Vagina (tissue), 2 donors: ENCODE measurements at regions of chr13 and their contacts with region 1.

Region 1: DNA sequence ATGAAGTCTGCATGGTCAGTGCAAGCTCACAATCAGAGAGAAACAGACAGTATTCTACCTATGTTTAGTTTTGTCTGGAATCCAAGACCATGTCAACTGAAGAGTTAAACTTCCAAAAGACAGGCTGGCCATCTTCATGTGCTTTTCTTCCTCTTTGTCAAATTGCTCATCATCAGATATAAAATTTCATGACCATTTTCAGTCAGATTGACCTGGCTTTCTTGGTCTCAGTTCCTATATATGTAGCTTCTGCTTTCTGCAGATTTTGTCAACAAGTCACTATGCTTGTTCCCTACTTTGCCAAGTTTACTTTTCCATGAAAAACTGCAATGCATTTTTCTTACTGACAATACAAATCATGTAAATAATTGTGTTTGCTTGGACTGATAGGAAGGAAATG is 13.9 kb downstream of the SLC46A3 start:
- DNase-seq: no peak
- H3K4me3 ChIP-seq: no peak overlapping the region
- H3K27ac ChIP-seq: no peak overlapping the region
- H3K4me1 ChIP-seq: no peaks in the 10 kb centered on the region
- H3K27me3 ChIP-seq: no peaks in the 10 kb centered on the region
- CTCF ChIP-seq: no peak
- POLR2A ChIP-seq: no peak

Region 2: DNA sequence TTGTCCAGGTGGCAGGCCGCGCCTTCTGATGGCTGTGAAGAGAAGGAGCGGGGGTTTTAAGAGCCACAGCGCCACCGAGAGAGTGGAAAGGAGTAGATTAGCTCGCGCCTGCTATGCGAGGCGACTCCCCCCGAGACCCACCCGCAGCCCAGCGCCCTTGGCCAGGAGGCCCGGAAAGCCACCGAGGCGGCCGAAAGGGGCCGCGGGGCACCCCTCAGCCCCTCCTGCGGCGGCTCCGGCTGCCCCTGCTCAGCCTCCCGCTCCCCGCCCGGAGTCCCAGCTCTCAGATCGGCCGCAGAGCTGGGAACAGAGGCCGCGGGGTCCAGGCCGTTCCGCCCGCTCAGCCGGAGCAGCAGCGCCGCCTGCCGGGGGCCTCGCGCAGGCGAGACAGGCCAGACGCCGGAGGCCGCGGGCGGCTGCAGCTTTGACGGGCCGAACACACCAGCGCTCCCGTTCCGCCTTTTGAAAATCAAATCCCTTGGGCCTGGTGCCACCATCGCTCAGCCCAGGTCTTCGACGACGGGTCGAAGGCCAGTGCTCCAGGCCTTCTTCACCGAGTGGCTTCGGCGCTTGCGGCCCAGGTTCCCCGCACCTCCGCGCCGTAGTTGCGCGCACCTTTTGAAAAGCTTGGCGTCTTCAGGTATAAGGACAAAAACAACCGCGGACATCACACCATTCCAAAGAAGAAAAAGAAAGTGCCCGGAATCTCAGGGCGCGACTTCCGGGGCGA is 751.1 kb before region 1 on chr13:
- intact Hi-C with region 1: loop called (anchors 5 kb)
- DNase-seq: no peak
- H3K4me3 ChIP-seq: peak overlapping the region; percentile 47 to 48
- H3K27ac ChIP-seq: no peak overlapping the region
- H3K4me1 ChIP-seq: peaks cover 19% of the 10 kb centered on the region
- H3K27me3 ChIP-seq: peaks cover 3% of the 10 kb centered on the region
- CTCF ChIP-seq: peak; percentile 32 to 77 (median 70)
- POLR2A ChIP-seq: no peak

Region 3: DNA sequence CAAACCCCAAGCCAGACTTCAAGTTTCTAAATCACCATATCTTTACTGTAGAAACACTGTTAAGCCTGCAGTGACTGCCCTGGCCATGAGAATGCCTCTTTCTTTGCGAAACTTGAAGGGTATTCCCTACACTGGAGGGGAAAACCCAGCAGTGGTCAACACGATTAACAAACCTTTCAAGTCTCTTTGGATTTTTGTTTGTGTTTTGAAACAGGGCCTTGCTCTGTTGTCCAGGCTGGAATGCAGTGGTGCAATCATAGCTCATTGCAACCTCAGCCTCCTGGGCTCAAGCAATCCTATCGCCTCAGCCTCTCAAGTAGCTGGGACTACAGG is 63.3 kb before region 1 on chr13:
- intact Hi-C with region 1: no loop called
- DNase-seq: no peak
- H3K4me3 ChIP-seq: no peak overlapping the region
- H3K27ac ChIP-seq: peak overlapping the region; percentile 45
- H3K4me1 ChIP-seq: no peaks in the 10 kb centered on the region
- H3K27me3 ChIP-seq: no peaks in the 10 kb centered on the region
- CTCF ChIP-seq: no peak
- POLR2A ChIP-seq: no peak